ENCODE measurements at regions of chr12 and their contacts with region 1.

Region 1: GRCh38 chr12:75334384-75335030 is at the start of gene GLIPR1L1:
- DNase-seq: peak; percentile 81
- ATAC-seq: peak; percentile 26; the same call in 1 of the 2 replicates
- H3K4me3 ChIP-seq: no peak within 1 kb of the TSS
- H3K27ac ChIP-seq: no peak within 1 kb of the TSS
- H3K4me1 ChIP-seq: no peaks in the 10 kb centered on the region; the same call in 1 of the 2 replicates
- H3K27me3 ChIP-seq: no peaks in the 10 kb centered on the region
- CTCF ChIP-seq: peak; percentile 81
- total RNA-seq, gene GLIPR1L1: not detected in 2 replicates

Region 2: DNA sequence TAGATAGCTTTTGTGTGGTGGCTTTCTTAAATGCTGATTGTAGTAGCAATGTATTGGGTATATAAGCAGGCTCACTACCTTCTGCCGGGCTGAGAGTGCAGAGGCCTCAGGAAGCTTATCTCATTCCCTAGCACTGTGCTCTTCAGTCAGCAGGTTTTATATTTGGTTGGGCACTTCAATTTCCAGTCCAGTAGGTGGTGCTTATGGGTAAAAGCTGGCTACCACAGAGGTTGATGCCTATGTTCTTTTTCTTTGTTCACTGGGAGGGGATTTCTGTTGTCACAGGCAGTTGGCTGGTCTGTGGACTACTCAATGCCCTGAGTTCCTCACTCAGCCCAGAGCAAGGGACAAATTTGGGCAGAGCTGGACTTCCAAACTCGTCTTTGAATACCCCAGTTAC is 103.1 kb after region 1 on chr12:
- CTCF ChIA-PET with region 1: no interaction called
- POLR2A ChIA-PET with region 1: no interaction called
- intact Hi-C with region 1: no loop called
- DNase-seq: peak; percentile 27
- ATAC-seq: peak; percentile 43
- H3K4me3 ChIP-seq: no peak overlapping the region
- H3K27ac ChIP-seq: no peak overlapping the region
- H3K4me1 ChIP-seq: no peaks in the 10 kb centered on the region
- H3K27me3 ChIP-seq: no peaks in the 10 kb centered on the region
- CTCF ChIP-seq: peak; percentile 39

Region 3: GRCh38 chr12:75489613-75490210 is 155.2 kb after region 1 on chr12:
- CTCF ChIA-PET with region 1: no interaction called
- POLR2A ChIA-PET with region 1: no interaction called
- intact Hi-C with region 1: loop called (anchors 5 kb)
- DNase-seq: peak; percentile 78
- ATAC-seq: peak; percentile 74
- H3K4me3 ChIP-seq: no peak overlapping the region
- H3K27ac ChIP-seq: peak overlapping the region; percentile 50
- H3K4me1 ChIP-seq: peaks cover 18% of the 10 kb centered on the region
- H3K27me3 ChIP-seq: no peaks in the 10 kb centered on the region
- CTCF ChIP-seq: no peak

Region 4: DNA sequence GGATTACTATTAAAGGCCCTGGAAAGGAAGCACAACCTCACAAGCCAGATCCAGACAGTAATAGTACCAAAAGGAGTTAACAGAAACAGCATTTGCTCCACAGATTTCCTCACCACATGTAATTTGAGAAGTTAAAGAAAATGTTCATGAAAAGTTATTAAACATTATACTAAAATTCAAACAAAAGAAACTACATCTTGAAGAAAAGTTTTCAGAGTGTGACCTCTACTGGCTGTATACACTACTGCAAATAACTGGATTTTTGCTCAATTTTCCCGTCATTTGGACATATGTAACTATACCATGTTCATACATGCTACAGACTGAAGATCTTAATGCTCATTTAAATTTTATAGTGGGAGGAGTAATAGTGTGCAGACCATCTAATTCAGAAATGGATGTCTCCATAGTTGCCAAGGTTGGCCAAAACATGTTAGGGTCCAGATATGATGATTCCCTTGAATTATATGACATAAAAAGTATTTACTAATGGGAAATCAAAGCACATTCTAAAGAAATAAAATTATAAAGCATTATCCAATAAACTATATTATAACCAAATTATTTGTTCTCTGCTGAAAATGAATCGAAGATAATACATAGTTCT is 171.3 kb after region 1 on chr12:
- CTCF ChIA-PET with region 1: no interaction called
- POLR2A ChIA-PET with region 1: no interaction called
- intact Hi-C with region 1: loop called (anchors 1 kb)
- DNase-seq: peak; percentile 64
- ATAC-seq: peak; percentile 37; the same call in 1 of the 2 replicates
- H3K4me3 ChIP-seq: no peak overlapping the region
- H3K27ac ChIP-seq: no peak overlapping the region
- H3K4me1 ChIP-seq: peaks cover 13% of the 10 kb centered on the region; the same call in 1 of the 2 replicates
- H3K27me3 ChIP-seq: no peaks in the 10 kb centered on the region
- CTCF ChIP-seq: peak; percentile 87

Measured in PC-3 (cell line).